AG04449 (cell line): ENCODE measurements at regions of chr11 and their contacts with region 1.

Region 1: DNA sequence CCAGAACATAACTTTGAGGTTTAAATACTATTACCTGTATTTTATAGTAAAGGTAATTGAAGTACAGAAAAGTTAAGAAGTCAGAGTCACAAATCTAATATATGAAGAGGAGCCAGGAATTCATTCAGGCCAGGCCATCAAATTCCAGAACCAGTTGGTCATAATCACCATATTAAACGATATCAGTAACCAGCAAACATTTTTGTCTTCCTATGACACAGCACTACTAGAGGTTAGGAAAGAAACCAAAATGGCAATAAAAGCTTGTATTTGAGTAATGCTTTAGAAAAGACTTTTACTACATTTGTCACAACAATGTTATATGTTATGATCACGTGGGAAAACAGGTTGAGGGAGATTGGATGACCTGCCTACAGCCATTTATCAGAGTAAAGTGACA is 62.2 kb downstream of the DKK3 start:
- DNase-seq: peak; percentile 34
- H3K4me3 ChIP-seq: no peak overlapping the region
- CTCF ChIP-seq: no peak

Region 2: DNA sequence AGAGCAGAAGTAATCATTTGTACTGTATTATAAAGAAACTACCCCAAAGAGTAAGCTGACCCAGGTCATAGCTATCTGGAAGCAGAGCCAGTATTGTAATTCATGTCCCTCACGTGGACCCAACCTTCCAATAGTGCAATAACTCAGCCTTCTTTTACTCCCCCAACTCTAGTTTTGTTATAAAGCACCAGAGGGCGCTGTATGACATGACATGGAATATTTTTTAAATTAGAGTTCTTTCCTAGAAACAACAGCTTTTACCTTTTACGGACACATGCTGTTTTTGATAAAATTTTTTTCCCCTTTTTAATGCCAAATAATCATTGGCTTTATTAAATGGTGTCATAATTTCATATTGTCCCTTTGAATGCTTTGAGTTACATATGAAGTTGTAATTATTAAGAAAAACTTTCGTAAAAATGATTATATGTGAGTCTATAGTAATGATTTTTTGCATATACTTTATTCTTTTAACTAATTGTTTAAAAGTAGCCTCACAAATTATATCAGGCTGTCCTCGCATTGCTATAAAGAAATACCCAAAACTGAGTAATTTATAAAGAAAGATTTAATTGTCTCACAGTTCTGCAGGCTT is 14.6 kb before region 1 on chr11:
- CTCF ChIA-PET with region 1: interaction called, 42 read pairs
- POLR2A ChIA-PET with region 1: no interaction called
- DNase-seq: no peak
- H3K4me3 ChIP-seq: no peak overlapping the region
- CTCF ChIP-seq: peak; percentile 40

Region 3: GRCh38 chr11:11958403-11959231 is 12.4 kb after region 1 on chr11:
- CTCF ChIA-PET with region 1: interaction called, 24 read pairs
- POLR2A ChIA-PET with region 1: no interaction called
- DNase-seq: no peak
- H3K4me3 ChIP-seq: no peak overlapping the region
- CTCF ChIP-seq: no peak